ENCODE measurements at regions of chr16 and their contacts with region 1.

Region 1: GRCh38 chr16:85610508-85611332 is 2.4 kb upstream of the GSE1 start:
- DNase-seq: peak; percentile 92
- H3K4me3 Mint-ChIP-seq: peak overlapping the region; percentile 66
- H3K27ac Mint-ChIP-seq: peak overlapping the region; percentile 49
- H3K4me1 Mint-ChIP-seq: peaks cover 32% of the 10 kb centered on the region
- H3K27me3 Mint-ChIP-seq: peaks cover 2% of the 10 kb centered on the region

Region 2: DNA sequence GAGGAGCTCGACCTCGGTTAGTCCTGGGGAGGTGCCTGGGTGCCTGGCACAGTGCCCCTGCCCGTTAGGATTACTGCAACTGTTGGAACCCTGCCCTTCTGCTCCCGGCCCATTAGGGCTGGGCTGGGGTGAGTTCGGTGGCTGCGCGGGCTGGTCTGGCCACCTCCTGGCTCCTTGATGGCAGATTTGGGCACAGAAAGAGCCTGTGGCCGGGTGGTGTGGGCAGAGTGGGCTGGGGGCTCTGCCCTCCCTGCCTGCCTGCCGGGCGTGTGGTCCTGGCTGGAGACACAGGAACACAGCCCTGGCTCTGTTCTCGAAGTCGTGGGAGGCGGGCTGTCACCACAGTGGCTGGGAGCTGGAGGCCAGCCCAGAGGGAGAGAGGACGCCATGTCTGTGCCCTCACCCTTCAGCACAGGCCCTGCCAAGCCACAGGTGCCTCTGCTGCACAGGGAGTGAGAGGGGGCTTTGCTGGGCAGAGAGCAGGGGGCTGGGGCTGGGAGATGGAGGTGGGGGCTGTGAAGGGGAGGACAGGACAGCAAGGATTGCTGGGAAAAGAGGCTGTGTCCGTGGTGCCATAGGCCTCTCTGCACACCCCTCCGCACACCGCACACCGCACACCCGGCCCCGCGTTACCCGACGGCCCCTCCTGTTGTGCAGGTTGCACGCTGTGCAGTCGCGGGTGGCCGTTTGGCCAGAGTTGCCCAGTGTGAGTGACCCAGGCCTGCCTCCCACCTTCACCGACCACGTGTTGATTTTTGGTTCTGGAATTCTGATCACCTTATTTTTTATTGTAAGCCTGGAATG is 234.2 kb before region 1 on chr16:
- CTCF ChIA-PET with region 1: no interaction called
- POLR2A ChIA-PET with region 1: no interaction called
- intact Hi-C with region 1: no loop called
- DNase-seq: no peak
- H3K4me3 Mint-ChIP-seq: no peak overlapping the region
- H3K27ac Mint-ChIP-seq: no peak overlapping the region
- H3K4me1 Mint-ChIP-seq: no peaks in the 10 kb centered on the region
- H3K27me3 Mint-ChIP-seq: peaks cover 3% of the 10 kb centered on the region

Region 3: DNA sequence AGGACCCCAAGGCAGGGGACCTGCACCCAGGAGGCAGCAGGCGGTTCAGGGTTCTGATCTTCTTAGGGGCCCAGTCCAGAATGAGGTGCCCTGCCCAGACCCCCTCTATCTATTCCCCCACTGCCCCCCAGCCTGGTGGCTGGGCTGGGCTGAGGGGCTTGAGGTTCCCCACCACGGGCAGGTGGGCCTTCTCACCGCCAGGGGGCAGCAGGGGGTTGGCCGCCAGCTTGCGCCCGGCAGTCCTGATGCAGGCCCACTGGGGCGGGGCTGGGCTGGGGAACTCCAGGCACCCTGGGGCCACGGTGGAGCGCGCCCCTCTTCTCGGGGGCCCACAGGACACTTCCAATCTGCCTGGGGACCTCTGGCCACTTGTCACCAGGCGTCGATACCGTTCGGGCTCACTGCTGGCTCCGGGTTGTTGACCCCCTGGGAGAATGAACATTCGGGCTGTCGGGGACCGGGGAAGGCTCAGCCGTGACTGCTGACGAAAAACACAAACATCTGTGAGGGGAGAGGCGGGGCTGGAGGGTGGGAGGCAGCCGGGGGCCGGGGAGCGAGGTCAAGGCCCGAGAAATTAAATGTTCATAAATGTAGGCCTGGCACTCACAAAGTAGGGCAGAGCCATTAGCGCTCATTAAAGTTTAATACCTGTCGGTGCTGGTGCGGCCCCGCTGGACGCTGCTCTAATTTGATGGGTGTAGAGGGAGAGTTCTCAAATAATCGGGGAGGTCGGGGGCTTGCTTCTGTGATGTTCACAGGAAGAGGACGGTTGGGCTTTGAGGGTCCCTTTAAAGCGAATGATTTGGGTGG is 216.8 kb before region 1 on chr16:
- CTCF ChIA-PET with region 1: interaction called, 21 read pairs
- POLR2A ChIA-PET with region 1: no interaction called
- intact Hi-C with region 1: no loop called
- DNase-seq: peak; percentile 69
- H3K4me3 Mint-ChIP-seq: no peak overlapping the region
- H3K27ac Mint-ChIP-seq: no peak overlapping the region
- H3K4me1 Mint-ChIP-seq: no peaks in the 10 kb centered on the region
- H3K27me3 Mint-ChIP-seq: no peaks in the 10 kb centered on the region

Region 4: DNA sequence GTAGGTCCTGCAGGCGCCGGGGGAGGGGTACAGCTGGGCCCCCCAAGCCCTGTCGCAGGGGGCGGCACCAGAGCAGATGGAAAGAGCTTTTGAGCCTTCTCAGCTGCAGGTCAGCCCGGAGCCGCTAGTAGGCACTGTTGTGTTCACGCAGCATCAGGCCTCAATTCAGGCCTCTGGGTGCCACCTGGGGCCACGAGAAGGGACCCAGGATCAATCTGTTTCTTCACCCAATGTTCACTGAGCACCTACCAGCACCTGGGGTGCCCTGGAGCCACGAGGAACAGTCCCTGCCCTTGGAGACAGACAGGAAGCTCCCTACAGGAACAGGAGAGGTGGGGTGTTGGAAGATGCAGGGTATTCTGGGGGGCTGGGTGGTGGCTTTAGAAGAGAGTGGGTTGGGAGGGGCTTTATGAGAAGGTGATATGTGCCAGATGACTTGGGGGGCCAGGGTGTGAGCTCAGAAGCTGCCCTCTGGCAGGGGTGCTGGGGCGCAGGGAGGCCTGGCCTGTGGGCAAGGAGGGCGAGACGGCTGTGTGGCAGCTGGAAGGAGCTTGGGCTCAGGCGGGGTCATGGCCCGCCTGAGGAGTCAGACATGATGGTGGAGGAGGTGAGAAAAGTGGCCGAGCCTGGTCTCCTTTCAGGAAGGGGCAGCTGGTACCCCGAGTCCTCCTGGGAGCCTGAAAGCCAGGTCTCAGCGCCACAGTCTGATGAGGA is 119.5 kb before region 1 on chr16:
- CTCF ChIA-PET with region 1: interaction called, 65 read pairs
- POLR2A ChIA-PET with region 1: interaction called, 3 read pairs
- intact Hi-C with region 1: loop called (anchors 1 kb)
- DNase-seq: peak; percentile 59
- H3K4me3 Mint-ChIP-seq: no peak overlapping the region
- H3K27ac Mint-ChIP-seq: no peak overlapping the region
- H3K4me1 Mint-ChIP-seq: no peaks in the 10 kb centered on the region
- H3K27me3 Mint-ChIP-seq: peaks cover 1% of the 10 kb centered on the region

Region 5: GRCh38 chr16:85554112-85554813 is 56.5 kb before region 1 on chr16:
- CTCF ChIA-PET with region 1: interaction called, 35 read pairs
- POLR2A ChIA-PET with region 1: interaction called, 15 read pairs
- intact Hi-C with region 1: loop called (anchors 1 kb)
- DNase-seq: peak; percentile 92
- H3K4me3 Mint-ChIP-seq: peak overlapping the region; percentile 82
- H3K27ac Mint-ChIP-seq: peak overlapping the region; percentile 91
- H3K4me1 Mint-ChIP-seq: peaks cover 35% of the 10 kb centered on the region
- H3K27me3 Mint-ChIP-seq: no peaks in the 10 kb centered on the region

Region 6: DNA sequence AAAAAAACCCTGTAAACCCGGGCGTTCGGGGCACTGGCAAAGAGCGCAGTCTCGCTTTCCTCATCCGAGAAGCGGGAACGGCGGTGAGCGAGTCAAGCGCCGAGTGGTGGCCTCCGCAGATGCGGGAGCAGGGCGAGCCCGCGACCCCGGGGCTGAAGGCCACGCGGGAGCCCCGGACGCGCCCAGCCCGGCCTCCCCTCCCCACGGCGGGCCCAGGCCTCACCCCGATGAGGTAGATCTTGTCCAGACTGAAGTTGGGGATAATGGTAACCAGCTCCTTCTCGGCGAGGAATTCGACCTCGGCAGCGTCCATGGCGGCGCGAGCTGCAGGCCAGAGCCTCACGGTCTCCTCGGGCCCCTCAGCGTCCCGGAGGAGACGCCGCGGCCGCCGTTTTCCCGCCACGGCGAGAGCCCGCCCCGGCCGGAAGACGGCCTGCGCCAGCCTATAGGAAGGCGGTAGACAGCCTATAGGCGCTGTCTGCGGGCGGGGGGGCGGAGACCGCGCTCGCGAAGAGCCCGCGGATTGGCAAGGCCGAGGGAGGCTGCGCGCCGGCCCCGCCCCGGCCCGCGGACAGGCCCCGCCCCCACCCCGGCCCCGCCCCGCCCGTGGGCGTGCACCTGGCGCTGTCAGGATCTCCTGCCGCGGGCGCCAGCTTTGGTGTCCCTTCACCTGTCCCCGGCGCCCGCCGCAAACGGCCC is 78.0 kb after region 1 on chr16 and contains the start of gene GINS2:
- CTCF ChIA-PET with region 1: interaction called, 6 read pairs
- POLR2A ChIA-PET with region 1: no interaction called
- intact Hi-C with region 1: loop called (anchors 2 kb)
- DNase-seq: peak; percentile 95
- H3K4me3 Mint-ChIP-seq: peak within 1 kb of the TSS; percentile 88
- H3K27ac Mint-ChIP-seq: peak within 1 kb of the TSS; percentile 67
- H3K4me1 Mint-ChIP-seq: peaks cover 15% of the 10 kb centered on the region
- H3K27me3 Mint-ChIP-seq: no peaks in the 10 kb centered on the region
- total RNA-seq, gene GINS2: 66.9 to 67.8 TPM

Measured in activated CD4-positive, alpha-beta memory T cell treated with anti-CD3 and anti-CD28 coated beads for 36 hours (primary cell).